ENCODE measurements at regions of chr1 and their contacts with region 1.

Region 1: DNA sequence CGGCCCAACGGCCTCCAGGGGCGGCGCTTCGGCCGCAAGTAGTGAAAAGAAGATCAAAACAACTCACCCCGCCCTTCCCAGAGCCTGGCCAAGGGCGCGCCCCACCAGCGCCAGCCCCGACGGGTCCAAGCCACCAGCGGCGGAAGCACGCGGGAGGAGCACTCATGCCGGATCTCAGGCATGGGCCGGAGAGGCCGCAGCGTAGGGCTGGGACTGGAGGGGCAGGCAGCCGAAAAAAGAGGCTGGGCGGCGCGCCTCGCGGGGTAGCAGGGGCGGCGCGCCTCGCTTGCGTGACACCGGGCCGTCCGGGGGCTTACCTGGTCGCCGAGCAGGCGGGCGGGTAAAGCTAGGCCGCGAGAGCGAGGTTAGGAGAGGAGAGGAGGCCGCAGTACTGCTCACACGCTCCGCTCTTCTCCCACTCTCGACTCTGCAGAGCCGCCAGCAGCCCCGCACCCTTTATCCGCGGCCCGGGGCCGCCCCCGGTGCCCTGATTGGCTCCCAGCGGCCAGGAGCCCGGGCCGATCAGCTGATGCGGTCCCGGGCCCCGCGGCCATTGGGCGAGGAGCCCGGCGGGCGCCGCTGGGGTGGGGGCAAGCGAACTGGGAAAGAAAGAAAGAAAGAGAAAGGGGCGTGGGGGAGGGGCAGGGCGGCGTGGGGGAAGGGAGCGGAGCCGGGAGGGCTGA is at the start of gene GLUL:
- DNase-seq: peak; percentile 94
- H3K4me3 ChIP-seq: peak within 1 kb of the TSS; percentile 56 to 90
- H3K27ac ChIP-seq: peak within 1 kb of the TSS; percentile 97 to 99
- H3K4me1 ChIP-seq: no peaks in the 10 kb centered on the region
- H3K27me3 ChIP-seq: no peaks in the 10 kb centered on the region
- CTCF ChIP-seq: peak in 2 of 4 experiments; percentile 3 to 4
- POLR2A ChIP-seq: peak; percentile 98
- total RNA-seq, gene GLUL: 538 to 1,389 TPM

Region 2: GRCh38 chr1:182291584-182292192 is 99.8 kb before region 1 on chr1:
- intact Hi-C with region 1: loop called (anchors 1 kb)
- DNase-seq: no peak
- H3K4me3 ChIP-seq: no peak overlapping the region
- H3K27ac ChIP-seq: no peak overlapping the region
- H3K4me1 ChIP-seq: no peaks in the 10 kb centered on the region
- H3K27me3 ChIP-seq: no peaks in the 10 kb centered on the region
- CTCF ChIP-seq: no peak
- POLR2A ChIP-seq: no peak

Region 3: GRCh38 chr1:182348961-182349747 is 42.3 kb before region 1 on chr1:
- intact Hi-C with region 1: loop called (anchors 2 kb)
- DNase-seq: no peak
- H3K4me3 ChIP-seq: no peak overlapping the region
- H3K27ac ChIP-seq: peak overlapping the region in 1 of 2 donors; percentile 27
- H3K4me1 ChIP-seq: no peaks in the 10 kb centered on the region
- H3K27me3 ChIP-seq: no peaks in the 10 kb centered on the region
- CTCF ChIP-seq: no peak
- POLR2A ChIP-seq: no peak

Region 4: DNA sequence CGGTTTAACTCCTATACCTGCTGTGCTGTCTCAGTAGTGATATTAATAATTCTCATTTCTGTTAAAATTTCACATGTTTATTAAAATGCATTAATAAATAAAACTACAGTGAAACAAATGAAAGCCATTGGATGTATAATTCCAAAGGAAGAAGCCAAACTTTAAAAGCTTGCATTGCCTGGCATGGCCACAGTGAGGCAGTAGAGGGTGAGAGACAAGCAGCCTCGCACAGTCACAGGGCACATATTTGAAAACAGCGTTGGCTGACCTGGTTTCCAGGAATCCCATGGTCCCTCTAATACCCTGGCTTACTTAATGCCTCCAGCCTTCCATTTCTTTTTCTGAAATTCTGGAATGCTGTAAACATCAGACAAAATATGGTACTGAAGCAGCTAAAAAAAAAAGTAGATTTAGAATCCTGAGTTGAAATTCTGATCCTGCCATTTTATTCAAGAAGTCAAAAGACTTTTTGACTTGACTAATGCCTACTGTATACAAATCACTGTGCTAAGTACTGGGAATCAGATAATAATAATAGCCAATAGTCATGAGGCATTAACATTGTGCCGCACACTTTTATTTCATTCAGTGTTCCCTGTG is 204.2 kb after region 1 on chr1:
- intact Hi-C with region 1: loop called (anchors 10 kb)
- DNase-seq: peak; percentile 40
- H3K4me3 ChIP-seq: no peak overlapping the region
- H3K27ac ChIP-seq: no peak overlapping the region
- H3K4me1 ChIP-seq: no peaks in the 10 kb centered on the region
- H3K27me3 ChIP-seq: no peaks in the 10 kb centered on the region
- CTCF ChIP-seq: peak; percentile 30 to 77 (median 62)
- POLR2A ChIP-seq: no peak

Region 5: GRCh38 chr1:182789138-182790076 is 397.9 kb after region 1 on chr1 and contains the start of gene NPL:
- intact Hi-C with region 1: loop called (anchors 10 kb)
- DNase-seq: peak; percentile 77
- H3K4me3 ChIP-seq: peak within 1 kb of the TSS; percentile 50
- H3K27ac ChIP-seq: peak within 1 kb of the TSS; percentile 10 to 63
- H3K4me1 ChIP-seq: no peaks in the 10 kb centered on the region
- H3K27me3 ChIP-seq: no peaks in the 10 kb centered on the region
- CTCF ChIP-seq: peak in 1 of 4 experiments; percentile 18
- POLR2A ChIP-seq: peak; percentile 89
- total RNA-seq, gene NPL: 2.2 to 6.8 TPM